Aorta (tissue), 5 donors: ENCODE measurements at regions of chr11 and their contacts with region 1.

Region 1: DNA sequence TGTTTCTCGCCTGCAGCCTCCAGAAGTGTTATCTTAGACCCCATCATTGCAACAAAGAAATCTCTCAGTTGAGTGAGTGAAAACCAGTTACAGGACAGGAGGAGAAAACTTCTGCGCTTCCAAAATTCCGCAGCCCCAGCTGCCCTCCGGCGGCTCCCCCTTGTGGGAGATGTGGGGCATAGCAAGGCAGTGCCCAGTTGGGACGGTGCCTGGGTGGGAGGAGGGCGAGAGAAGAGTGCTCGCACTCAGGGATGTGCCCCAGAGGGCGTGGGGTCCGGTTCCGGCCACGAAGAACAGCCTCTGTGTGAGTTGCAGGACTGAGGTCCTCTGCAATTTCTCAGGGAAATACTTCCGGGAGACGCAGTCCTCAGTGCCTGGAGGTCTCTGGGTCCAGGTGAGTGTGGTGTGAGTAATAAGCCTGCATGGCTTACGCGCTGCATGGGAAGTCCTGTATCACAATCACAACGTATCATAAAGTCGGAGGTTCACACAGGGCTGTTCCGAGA is 87.0 kb upstream of the BLID start:
- DNase-seq: peak; percentile 80 to 91
- ATAC-seq: peak; percentile 91
- H3K4me3 ChIP-seq: peak overlapping the region; percentile 38 to 73
- H3K27ac ChIP-seq: peak overlapping the region in 1 of 2 donors; percentile 22
- H3K4me1 ChIP-seq: peaks cover 3 to 8% of the 10 kb centered on the region in 2 donors
- H3K27me3 ChIP-seq: no peaks in the 10 kb centered on the region

Region 2: DNA sequence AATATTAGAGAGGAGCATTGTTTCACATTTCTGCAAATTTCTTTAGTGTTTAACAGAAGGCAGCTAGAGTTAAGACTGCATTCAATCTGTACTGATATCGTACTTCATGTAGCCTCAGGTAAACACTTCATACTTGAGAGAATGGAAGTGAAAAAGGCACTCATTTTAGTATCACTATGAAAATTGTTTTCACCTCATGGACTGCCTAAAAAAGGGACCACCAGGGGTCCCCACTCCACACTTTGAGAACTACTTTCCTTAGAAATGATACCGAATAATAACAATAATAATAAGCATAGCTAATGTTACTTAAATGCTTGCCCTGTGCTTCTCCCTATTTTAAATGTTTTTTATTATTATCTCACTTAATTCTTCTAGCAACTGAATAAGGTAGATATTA is 182.1 kb before region 1 on chr11:
- intact Hi-C with region 1: loop called in 1 of 2 experiments (anchors 5 kb)
- DNase-seq: no peak
- ATAC-seq: no peak
- H3K4me3 ChIP-seq: no peak overlapping the region
- H3K27ac ChIP-seq: no peak overlapping the region
- H3K4me1 ChIP-seq: no peaks in the 10 kb centered on the region
- H3K27me3 ChIP-seq: no peaks in the 10 kb centered on the region

Region 3: GRCh38 chr11:122038543-122038942 is 164.5 kb before region 1 on chr11:
- intact Hi-C with region 1: loop called in 1 of 2 experiments (anchors 5 kb)
- DNase-seq: no peak
- ATAC-seq: no peak
- H3K4me3 ChIP-seq: no peak overlapping the region
- H3K27ac ChIP-seq: no peak overlapping the region
- H3K4me1 ChIP-seq: peaks cover 3 to 8% of the 10 kb centered on the region in 2 donors
- H3K27me3 ChIP-seq: no peaks in the 10 kb centered on the region

Region 4: DNA sequence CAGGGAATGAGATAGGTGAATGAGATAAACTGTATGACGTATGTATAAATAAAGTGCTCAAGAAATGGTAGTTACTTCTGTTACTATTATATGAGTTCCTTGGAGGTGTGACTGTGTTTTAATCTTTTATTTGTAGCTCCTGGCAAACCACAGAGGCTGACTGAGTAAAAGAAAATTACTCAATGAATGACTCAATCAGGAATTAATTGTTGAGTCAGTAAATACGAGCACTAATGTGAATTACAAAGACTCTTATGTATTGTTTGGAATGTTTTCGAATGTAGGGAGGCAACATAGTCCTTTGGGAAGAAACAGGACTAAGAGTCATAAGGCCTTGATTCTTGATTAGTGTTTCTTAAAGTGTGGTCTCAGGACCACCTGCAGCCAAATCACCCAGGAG is 35.9 kb before region 1 on chr11:
- intact Hi-C with region 1: loop called (anchors 5 kb)
- DNase-seq: no peak
- ATAC-seq: no peak
- H3K4me3 ChIP-seq: no peak overlapping the region
- H3K27ac ChIP-seq: no peak overlapping the region
- H3K4me1 ChIP-seq: peaks cover 1 to 5% of the 10 kb centered on the region in 2 donors
- H3K27me3 ChIP-seq: no peaks in the 10 kb centered on the region